Thyroid gland (tissue), 4 donors: ENCODE measurements at regions of chr20 and their contacts with region 1.

Region 1: GRCh38 chr20:60467078-60467477 is 508.9 kb downstream of the CDH26 start:
- DNase-seq: peak; percentile 90 to 91
- H3K4me3 ChIP-seq: no peak overlapping the region
- H3K27ac ChIP-seq: peak overlapping the region; percentile 82 to 96 (median 94)
- H3K4me1 ChIP-seq: peaks cover 38 to 58% of the 10 kb centered on the region in 2 donors
- H3K27me3 ChIP-seq: no peaks in the 10 kb centered on the region
- CTCF ChIP-seq: no peak
- POLR2A ChIP-seq: no peak

Region 2: DNA sequence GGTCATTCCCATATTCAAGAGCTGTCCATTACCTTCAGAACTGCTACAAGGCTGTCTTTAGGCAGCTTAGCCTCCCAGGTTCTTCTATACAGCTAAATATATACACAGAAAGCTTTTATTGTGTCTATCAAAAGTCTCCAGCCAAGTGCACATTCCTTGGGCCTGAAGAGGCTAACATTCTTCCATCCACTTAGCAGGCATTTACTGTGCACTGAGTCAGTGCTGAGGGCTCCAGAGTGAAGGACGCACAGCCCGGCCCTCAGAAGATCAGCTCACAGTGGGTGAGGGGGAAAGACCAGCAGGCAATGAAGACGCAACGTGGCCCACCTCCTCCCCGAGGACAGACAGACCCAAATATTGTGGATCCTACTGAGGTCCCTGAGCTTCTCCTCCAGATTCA is 61.1 kb after region 1 on chr20:
- intact Hi-C with region 1: loop called (anchors 10 kb)
- DNase-seq: peak; percentile 72 to 74
- H3K4me3 ChIP-seq: no peak overlapping the region
- H3K27ac ChIP-seq: peak overlapping the region in 2 of 3 donors; percentile 50 to 68
- H3K4me1 ChIP-seq: peaks cover 5 to 18% of the 10 kb centered on the region in 2 donors
- H3K27me3 ChIP-seq: no peaks in the 10 kb centered on the region
- CTCF ChIP-seq: no peak
- POLR2A ChIP-seq: no peak